IMR-90 (cell line): ENCODE measurements at regions of chr6 and their contacts with region 1.

Region 1: GRCh38 chr6:26196846-26197648 is 109.8 kb downstream of the HFE start:
- DNase-seq: peak; percentile 95
- ATAC-seq: peak; percentile 68
- H3K4me3 ChIP-seq: peak overlapping the region; percentile 55
- H3K27ac ChIP-seq: peak overlapping the region; percentile 86
- H3K4me1 ChIP-seq: no peaks in the 10 kb centered on the region; the same call in 1 of the 2 replicates
- H3K27me3 ChIP-seq: no peaks in the 10 kb centered on the region
- CTCF ChIP-seq: no peak; the same call in 1 of the 2 replicates
- POLR2A ChIP-seq: peak; percentile 97
- RAD21 ChIP-seq: no peak

Region 2: DNA sequence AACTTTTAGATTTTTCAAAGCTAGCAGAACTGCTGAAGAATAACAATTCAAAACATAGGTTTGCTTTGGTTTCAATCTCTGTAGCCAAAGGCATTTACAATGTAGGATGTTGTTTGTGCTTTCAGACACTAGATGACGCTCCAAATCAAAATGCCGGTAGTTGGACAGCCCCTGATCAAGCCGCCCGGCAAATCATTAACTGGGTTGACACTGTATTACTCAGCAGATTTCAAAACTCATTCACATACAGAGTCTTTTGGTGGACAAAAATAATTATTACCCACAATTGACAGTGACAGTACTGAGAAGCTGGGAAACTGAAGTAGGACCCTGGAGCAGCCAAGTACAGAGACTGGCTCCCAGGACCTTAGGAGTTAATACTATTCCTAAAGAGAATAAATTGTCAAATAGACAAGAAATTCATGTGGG is 131.1 kb before region 1 on chr6:
- CTCF ChIA-PET with region 1: no interaction called
- POLR2A ChIA-PET with region 1: no interaction called
- dilution Hi-C with region 1: no loop called
- in situ Hi-C with region 1: no loop called
- intact Hi-C with region 1: loop called (anchors 2 kb)
- DNase-seq: peak; percentile 82
- ATAC-seq: peak; percentile 98
- H3K4me3 ChIP-seq: no peak overlapping the region
- H3K27ac ChIP-seq: peak overlapping the region; percentile 33; the same call in 1 of the 2 replicates
- H3K4me1 ChIP-seq: no peaks in the 10 kb centered on the region
- H3K27me3 ChIP-seq: no peaks in the 10 kb centered on the region
- CTCF ChIP-seq: peak; percentile 96
- POLR2A ChIP-seq: no peak
- RAD21 ChIP-seq: peak; percentile 90

Region 3: DNA sequence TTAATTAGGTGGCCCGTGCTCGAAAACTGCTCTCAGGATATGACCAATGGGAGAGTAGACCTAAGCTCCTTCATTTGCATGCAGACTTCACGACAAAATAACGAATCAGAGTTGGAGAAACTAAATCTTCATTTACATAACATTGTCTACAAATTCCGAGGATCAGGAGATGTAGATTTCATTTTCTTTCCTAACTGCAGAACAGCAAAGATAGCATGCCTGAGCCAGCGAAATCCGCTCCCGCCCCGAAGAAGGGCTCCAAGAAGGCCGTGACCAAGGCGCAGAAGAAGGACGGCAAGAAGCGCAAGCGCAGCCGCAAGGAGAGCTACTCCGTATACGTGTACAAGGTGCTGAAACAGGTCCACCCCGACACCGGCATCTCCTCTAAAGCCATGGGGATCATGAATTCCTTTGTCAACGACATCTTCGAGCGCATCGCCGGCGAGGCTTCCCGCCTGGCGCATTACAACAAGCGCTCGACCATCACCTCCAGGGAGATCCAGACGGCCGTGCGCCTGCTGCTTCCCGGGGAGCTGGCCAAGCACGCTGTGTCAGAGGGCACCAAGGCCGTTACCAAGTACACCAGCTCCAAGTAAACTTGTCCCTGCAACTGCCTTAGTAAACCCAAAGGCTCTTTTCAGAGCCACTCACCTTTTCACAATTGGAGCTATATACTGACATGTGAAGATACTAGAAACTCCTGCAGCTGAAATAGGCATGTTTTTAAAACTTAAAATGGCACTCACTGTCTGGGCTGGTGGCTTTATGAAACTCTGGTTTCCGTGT is 13.3 kb before region 1 on chr6:
- CTCF ChIA-PET with region 1: interaction called, 10 read pairs
- POLR2A ChIA-PET with region 1: interaction called, 17 read pairs
- dilution Hi-C with region 1: no loop called
- in situ Hi-C with region 1: no loop called
- intact Hi-C with region 1: no loop called
- DNase-seq: peak; percentile 92
- ATAC-seq: peak; percentile 93
- H3K4me3 ChIP-seq: peak overlapping the region; percentile 40
- H3K27ac ChIP-seq: peak overlapping the region; percentile 15; the same call in 1 of the 2 replicates
- H3K4me1 ChIP-seq: no peaks in the 10 kb centered on the region; the same call in 1 of the 2 replicates
- H3K27me3 ChIP-seq: no peaks in the 10 kb centered on the region
- CTCF ChIP-seq: no peak
- POLR2A ChIP-seq: peak; percentile 80
- RAD21 ChIP-seq: no peak

Region 4: GRCh38 chr6:27132532-27133280 is 935.7 kb after region 1 on chr6:
- CTCF ChIA-PET with region 1: no interaction called
- POLR2A ChIA-PET with region 1: no interaction called
- dilution Hi-C with region 1: no loop called
- in situ Hi-C with region 1: loop called (anchors 25 kb)
- intact Hi-C with region 1: loop called (anchors 5 kb)
- DNase-seq: peak; percentile 100
- ATAC-seq: peak; percentile 89
- H3K4me3 ChIP-seq: peak overlapping the region; percentile 50
- H3K27ac ChIP-seq: peak overlapping the region; percentile 79
- H3K4me1 ChIP-seq: no peaks in the 10 kb centered on the region
- H3K27me3 ChIP-seq: no peaks in the 10 kb centered on the region
- CTCF ChIP-seq: no peak
- POLR2A ChIP-seq: peak; percentile 99
- RAD21 ChIP-seq: no peak